Activated T-helper 2 cell treated with anti-CD3 and anti-CD28 coated beads, Interferon-gamma antibody, Interleukin-2, Interleukin-4, amounts not matched to agents 10 μg/mL and 5 μg/mL and 100 μg/mL, durations not matched to agents 14 hours and 24 hours and 36 hours (primary cell): ENCODE measurements at regions of chr13 and their contacts with region 1.

Region 1: GRCh38 chr13:39684531-39685137 is 29.2 kb downstream of the COG6 start:
- DNase-seq: no peak
- H3K4me3 Mint-ChIP-seq: no peak overlapping the region
- H3K27ac Mint-ChIP-seq: no peak overlapping the region
- H3K4me1 Mint-ChIP-seq: peaks cover 27% of the 10 kb centered on the region
- H3K27me3 Mint-ChIP-seq: no peaks in the 10 kb centered on the region

Region 2: GRCh38 chr13:39760521-39760920 is 75.9 kb after region 1 on chr13:
- intact Hi-C with region 1: no loop called
- DNase-seq: no peak
- H3K4me3 Mint-ChIP-seq: no peak overlapping the region
- H3K27ac Mint-ChIP-seq: no peak overlapping the region
- H3K4me1 Mint-ChIP-seq: peaks cover 2% of the 10 kb centered on the region
- H3K27me3 Mint-ChIP-seq: no peaks in the 10 kb centered on the region

Region 3: GRCh38 chr13:39942552-39943273 is 258.1 kb after region 1 on chr13:
- intact Hi-C with region 1: loop called (anchors 5 kb)
- DNase-seq: peak; percentile 38
- H3K4me3 Mint-ChIP-seq: no peak overlapping the region
- H3K27ac Mint-ChIP-seq: no peak overlapping the region
- H3K4me1 Mint-ChIP-seq: peaks cover 17% of the 10 kb centered on the region
- H3K27me3 Mint-ChIP-seq: peaks cover 1% of the 10 kb centered on the region

Region 4: GRCh38 chr13:40388617-40389016 is 704.0 kb after region 1 on chr13:
- intact Hi-C with region 1: loop called (anchors 10 kb)
- DNase-seq: peak; percentile 83
- H3K4me3 Mint-ChIP-seq: peak overlapping the region; percentile 80
- H3K27ac Mint-ChIP-seq: peak overlapping the region; percentile 98
- H3K4me1 Mint-ChIP-seq: peaks cover 38% of the 10 kb centered on the region
- H3K27me3 Mint-ChIP-seq: no peaks in the 10 kb centered on the region

Region 5: DNA sequence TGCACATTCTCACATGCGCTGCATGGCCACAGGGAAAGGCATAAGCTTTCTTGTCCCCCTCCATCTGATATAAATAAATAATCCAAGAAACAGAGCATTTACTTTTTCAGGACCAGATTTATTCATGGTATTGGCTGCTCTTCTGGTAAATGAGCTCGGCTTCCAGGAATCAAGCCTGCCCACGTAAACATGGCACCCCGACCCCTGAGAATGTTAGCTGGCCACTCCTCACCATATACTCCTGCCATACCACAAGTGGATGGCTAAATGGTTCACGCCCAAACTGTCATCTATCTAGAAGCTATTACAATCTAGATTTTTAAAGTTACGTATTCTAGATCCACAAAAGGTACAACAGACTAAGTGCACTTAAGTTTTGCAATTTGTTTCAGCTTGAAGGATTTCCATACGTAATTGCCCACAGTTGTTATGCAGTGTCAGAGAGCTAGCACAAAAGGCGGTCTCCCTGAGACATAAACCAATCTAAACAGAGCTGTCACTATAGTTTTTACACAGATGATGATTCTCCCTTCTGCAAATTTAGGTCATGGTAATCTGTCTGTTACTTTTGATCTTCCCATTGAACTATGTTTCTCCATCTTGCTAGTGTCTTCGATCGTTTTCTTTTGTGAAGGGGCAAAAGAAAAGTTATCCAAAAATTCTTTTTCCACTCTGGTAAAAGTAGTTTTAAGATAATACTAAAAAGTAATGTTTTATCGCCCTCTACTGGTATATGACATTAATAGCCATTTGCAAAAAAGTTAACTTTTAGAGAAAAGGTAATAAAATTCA is 998.0 kb after region 1 on chr13:
- intact Hi-C with region 1: loop called (anchors 2 kb)
- DNase-seq: no peak
- H3K4me3 Mint-ChIP-seq: no peak overlapping the region
- H3K27ac Mint-ChIP-seq: no peak overlapping the region
- H3K4me1 Mint-ChIP-seq: peaks cover 10% of the 10 kb centered on the region
- H3K27me3 Mint-ChIP-seq: no peaks in the 10 kb centered on the region